GM13976 (cell line): ENCODE measurements at regions of chr4 and their contacts with region 1.

Region 1: DNA sequence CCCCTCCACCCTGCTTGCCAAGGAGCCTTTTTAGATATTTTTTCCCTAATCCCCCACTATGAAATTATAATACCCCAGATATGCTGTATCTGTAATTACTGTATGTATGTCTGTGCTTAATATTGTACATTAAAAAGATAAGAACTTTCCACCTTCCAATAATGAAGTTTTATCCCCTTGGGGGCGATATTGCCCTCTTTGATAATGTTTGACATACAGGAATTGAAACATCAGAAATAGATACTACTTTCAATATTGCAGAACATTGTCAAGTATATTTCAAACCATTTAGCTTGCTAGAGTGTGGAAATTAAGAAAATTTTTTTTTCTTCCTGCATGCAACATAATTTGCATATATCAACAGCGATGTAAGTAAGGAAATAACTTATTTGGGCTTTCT is 58.9 kb downstream of the NAF1 start:
- DNase-seq: peak; percentile 20
- CTCF ChIP-seq: no peak

Region 2: GRCh38 chr4:163167333-163167626 is 59.5 kb after region 1 on chr4:
- in situ Hi-C with region 1: no loop called
- DNase-seq: no peak
- CTCF ChIP-seq: no peak

Region 3: DNA sequence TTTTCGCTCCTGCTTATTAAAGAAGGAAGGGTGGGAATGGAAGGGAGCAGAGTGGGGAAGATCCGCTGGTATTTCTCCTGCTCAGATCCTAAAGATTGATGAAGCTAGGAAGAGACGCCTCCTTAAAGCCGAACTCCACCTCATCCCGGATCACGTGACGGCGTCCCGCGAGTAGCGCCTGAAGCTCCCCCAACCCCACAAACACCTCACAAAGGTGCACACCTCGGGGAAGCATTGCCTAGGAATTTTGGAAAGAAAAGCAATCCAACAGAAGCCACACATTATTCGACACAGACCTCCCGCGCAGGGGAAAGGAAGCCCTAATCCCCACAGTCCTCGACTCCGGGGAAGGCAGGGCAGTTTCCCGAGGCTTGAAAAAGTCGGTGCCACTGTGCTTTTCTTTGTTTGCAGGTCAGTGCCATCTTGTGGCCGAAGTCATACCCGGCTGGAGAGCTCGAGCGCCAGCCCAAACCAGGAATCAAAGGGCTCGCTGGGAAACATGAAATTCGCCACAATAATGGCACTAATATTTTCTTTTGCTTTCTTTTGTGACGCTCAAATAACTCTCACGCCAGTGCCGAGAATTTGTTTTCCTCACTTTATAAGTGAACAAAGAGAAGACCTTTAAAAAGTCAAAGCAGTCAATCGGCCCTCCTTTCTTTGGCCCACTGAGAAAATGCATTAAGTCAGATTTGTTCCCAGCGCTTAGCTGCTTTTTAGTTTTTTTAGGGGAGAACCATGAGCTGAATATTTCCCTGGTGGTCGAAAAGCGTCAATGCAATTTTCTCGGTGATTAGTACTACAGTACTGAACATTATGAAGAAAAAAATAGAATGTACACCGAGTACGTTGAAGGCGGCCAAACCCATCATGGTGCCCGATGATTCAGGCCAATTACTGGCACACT is 225.0 kb after region 1 on chr4 and contains the start of gene NPY1R:
- in situ Hi-C with region 1: loop called (anchors 25 kb)
- DNase-seq: peak; percentile 65
- CTCF ChIP-seq: peak; percentile 45